Mammary epithelial cell (primary cell): ENCODE measurements at regions of chr18 and their contacts with region 1.

Region 1: DNA sequence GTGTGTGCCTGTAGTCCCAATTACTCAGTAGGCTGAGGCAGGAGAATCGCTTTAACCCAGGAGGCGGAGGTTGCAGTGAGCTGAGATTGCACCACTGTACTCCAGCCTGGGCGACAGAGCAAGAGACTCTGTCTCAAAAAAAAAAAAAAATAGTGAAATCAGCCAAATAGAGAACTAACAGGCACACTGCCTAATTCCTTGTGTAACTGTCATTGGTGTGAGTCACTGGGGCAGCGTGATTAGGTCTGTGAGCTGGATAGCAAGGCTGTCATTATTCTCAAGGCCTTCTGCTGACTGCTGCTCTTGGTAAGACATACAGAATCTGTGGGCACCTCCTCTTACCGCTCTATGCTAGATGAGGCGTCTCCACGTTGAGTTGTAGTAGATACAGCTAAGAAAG is 270.3 kb downstream of the NEDD4L start:
- DNase-seq: peak; percentile 92
- H3K4me3 ChIP-seq: no peak overlapping the region
- H3K27ac ChIP-seq: peak overlapping the region; percentile 91
- H3K4me1 ChIP-seq: peaks cover 62% of the 10 kb centered on the region
- H3K27me3 ChIP-seq: no peaks in the 10 kb centered on the region
- CTCF ChIP-seq: no peak

Region 2: DNA sequence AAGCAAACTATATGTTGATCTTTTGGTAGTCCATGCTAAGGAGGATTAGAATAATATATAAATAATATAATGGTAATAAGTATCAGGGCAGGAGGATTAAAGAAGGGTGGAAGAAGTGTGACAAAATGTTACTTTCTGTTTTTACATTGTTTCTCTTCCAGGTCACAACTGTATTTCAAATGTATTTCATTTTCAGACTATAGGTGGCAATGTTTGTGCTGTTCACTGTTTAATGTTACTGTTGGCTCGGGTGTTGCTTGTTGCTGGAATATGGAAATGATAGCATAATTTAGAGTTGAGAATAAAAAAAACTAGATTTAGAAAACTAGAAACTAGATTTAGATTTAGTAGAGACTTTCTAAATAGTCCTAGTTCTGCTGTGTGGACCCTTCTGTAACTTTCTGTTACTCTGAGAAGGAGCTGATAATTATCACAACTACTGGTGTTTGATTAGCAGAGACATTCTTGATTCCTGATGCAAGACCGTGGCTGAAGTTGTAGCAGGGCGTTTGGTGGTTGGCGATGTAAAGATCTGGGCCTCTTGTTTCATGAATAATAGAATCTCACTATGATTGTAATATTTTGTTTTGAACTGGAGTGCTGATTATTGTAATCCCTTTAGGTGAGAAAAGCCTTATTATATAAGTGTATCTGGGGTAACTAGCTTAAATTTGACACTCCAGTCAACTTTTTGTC is 262.4 kb before region 1 on chr18:
- CTCF ChIA-PET with region 1: no interaction called
- dilution Hi-C with region 1: no loop called
- in situ Hi-C with region 1: no loop called
- intact Hi-C with region 1: loop called (anchors 1 kb)
- DNase-seq: peak; percentile 32
- H3K4me3 ChIP-seq: no peak overlapping the region
- H3K27ac ChIP-seq: no peak overlapping the region
- H3K4me1 ChIP-seq: peaks cover 25% of the 10 kb centered on the region
- H3K27me3 ChIP-seq: no peaks in the 10 kb centered on the region
- CTCF ChIP-seq: peak; percentile 29 to 45

Region 3: DNA sequence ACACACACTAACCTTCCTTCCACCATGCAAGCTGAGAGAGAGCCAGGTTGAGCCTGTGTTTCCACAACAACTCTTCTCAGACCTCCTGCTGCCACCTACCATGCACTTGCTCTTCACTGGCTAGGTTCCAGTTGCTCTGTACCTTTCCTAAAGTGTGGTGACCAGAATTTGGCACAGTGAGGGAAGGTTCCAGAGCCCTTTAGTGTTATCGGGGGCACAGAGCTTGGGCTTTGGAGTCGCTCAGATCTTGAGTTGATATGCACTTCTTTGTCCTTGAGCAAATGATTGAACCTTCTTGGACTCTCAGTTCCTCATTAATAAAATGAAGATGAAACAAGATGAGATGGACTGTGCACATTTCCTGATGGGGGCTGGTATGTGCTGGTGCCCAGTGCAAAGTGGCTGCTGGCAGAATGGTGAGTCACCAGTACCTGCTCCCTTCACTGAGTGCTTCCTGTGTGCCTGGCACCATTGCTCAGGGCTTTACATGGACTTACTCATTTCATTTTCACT is 223.1 kb before region 1 on chr18:
- CTCF ChIA-PET with region 1: no interaction called
- dilution Hi-C with region 1: no loop called
- in situ Hi-C with region 1: no loop called
- intact Hi-C with region 1: no loop called
- DNase-seq: peak; percentile 77
- H3K4me3 ChIP-seq: no peak overlapping the region
- H3K27ac ChIP-seq: no peak overlapping the region
- H3K4me1 ChIP-seq: peaks cover 40% of the 10 kb centered on the region
- H3K27me3 ChIP-seq: no peaks in the 10 kb centered on the region
- CTCF ChIP-seq: no peak

Region 4: GRCh38 chr18:58268849-58269248 is 45.4 kb before region 1 on chr18:
- CTCF ChIA-PET with region 1: no interaction called
- dilution Hi-C with region 1: loop called (anchors 5 kb)
- in situ Hi-C with region 1: no loop called
- intact Hi-C with region 1: loop called (anchors 2 kb)
- DNase-seq: peak; percentile 95
- H3K4me3 ChIP-seq: no peak overlapping the region
- H3K27ac ChIP-seq: peak overlapping the region; percentile 95
- H3K4me1 ChIP-seq: peaks cover 58% of the 10 kb centered on the region
- H3K27me3 ChIP-seq: no peaks in the 10 kb centered on the region
- CTCF ChIP-seq: no peak

Region 5: GRCh38 chr18:58699551-58699950 is 385.3 kb after region 1 on chr18:
- CTCF ChIA-PET with region 1: no interaction called
- dilution Hi-C with region 1: no loop called
- in situ Hi-C with region 1: no loop called
- intact Hi-C with region 1: no loop called
- DNase-seq: no peak
- H3K4me3 ChIP-seq: no peak overlapping the region
- H3K27ac ChIP-seq: no peak overlapping the region
- H3K4me1 ChIP-seq: no peaks in the 10 kb centered on the region
- H3K27me3 ChIP-seq: no peaks in the 10 kb centered on the region
- CTCF ChIP-seq: no peak